Vagina (tissue), 2 donors: ENCODE measurements at regions of chr4 and their contacts with region 1.

Region 1: GRCh38 chr4:16677001-16677944 is 221.2 kb downstream of the LDB2 start:
- DNase-seq: no peak
- H3K4me3 ChIP-seq: no peak overlapping the region
- H3K27ac ChIP-seq: no peak overlapping the region
- H3K4me1 ChIP-seq: peaks cover 7% of the 10 kb centered on the region
- H3K27me3 ChIP-seq: no peaks in the 10 kb centered on the region
- CTCF ChIP-seq: no peak
- POLR2A ChIP-seq: no peak

Region 2: DNA sequence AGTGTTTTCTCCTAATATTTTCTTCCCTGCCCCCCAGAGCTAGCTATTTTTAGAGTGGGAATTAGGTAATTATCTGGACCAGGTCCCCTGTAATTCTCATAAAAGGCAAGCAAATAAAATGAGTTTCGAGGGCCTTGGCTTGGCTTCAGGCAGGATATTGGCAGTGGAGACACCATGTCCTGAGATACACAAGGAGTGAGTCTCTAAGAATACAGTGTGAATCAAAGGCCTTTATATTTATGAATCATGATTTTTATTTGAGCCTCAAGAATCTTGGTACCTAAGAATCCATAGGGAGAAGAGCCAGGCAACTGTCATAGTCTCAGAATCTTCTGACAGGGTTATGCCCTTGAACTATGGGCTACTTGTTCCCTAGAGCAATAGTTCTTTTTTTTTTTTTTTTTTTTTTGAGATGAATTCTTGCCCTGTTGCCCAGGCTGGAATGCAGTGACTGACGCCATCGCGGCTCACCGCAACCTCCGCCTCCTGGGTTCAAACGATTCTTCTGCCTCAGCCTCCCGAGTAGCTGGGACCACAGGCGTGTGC is 15.8 kb after region 1 on chr4:
- intact Hi-C with region 1: no loop called
- DNase-seq: no peak
- H3K4me3 ChIP-seq: no peak overlapping the region
- H3K27ac ChIP-seq: peak overlapping the region; percentile 68
- H3K4me1 ChIP-seq: peaks cover 11% of the 10 kb centered on the region
- H3K27me3 ChIP-seq: no peaks in the 10 kb centered on the region
- CTCF ChIP-seq: no peak
- POLR2A ChIP-seq: no peak

Region 3: GRCh38 chr4:16807355-16807754 is 130.1 kb after region 1 on chr4:
- intact Hi-C with region 1: no loop called
- DNase-seq: no peak
- H3K4me3 ChIP-seq: no peak overlapping the region
- H3K27ac ChIP-seq: no peak overlapping the region
- H3K4me1 ChIP-seq: no peaks in the 10 kb centered on the region
- H3K27me3 ChIP-seq: no peaks in the 10 kb centered on the region
- CTCF ChIP-seq: no peak
- POLR2A ChIP-seq: no peak

Region 4: DNA sequence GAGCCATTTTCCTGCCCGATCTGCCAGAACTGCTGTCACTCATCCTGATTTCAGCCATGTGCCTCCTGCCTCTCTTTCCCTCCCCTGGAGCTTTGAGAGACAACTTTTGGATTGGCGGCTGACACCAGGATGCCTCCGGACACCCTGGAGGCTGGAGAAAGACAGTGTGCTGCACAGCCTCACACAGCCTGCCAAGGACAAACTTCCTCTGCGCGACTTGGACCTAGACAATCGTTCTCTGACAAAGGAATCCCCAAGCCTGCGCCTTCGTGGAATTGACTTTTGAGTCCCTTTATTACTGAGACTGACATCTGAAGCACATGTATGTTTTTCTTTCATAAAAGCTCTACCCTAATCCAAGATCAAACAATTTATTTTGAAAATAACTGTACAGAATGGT is 232.0 kb after region 1 on chr4:
- intact Hi-C with region 1: no loop called
- DNase-seq: no peak
- H3K4me3 ChIP-seq: no peak overlapping the region
- H3K27ac ChIP-seq: no peak overlapping the region
- H3K4me1 ChIP-seq: no peaks in the 10 kb centered on the region
- H3K27me3 ChIP-seq: no peaks in the 10 kb centered on the region
- CTCF ChIP-seq: no peak
- POLR2A ChIP-seq: no peak

Region 5: GRCh38 chr4:17889692-17890091 is 1212.4 kb after region 1 on chr4:
- intact Hi-C with region 1: loop called (anchors 5 kb)
- DNase-seq: no peak
- H3K4me3 ChIP-seq: no peak overlapping the region
- H3K27ac ChIP-seq: no peak overlapping the region
- H3K4me1 ChIP-seq: no peaks in the 10 kb centered on the region
- H3K27me3 ChIP-seq: no peaks in the 10 kb centered on the region
- CTCF ChIP-seq: no peak
- POLR2A ChIP-seq: no peak